Transverse colon (tissue), 4 donors: ENCODE measurements at regions of chr3 and their contacts with region 1.

Region 1: DNA sequence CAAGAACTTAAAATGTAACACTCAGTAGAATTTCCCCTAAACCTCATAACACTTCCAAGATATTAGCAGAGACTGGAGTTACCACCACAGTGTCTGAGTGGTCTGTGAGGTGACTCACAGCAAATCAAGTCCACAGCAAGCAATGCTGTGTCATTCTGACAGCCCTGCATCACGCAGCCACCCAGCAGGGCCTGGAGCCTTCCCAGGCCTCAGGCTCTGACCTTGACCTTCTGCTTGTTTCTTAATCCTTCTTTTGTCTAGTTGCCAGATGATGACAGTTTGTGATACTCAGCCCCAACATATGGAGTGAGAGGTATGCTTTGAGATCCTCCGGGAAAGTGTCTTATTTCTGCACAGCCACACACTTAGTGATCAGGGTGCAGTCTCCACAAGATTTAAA is 82.5 kb downstream of the TOP2B start:
- DNase-seq: no peak
- H3K4me3 ChIP-seq: no peak overlapping the region
- H3K27ac ChIP-seq: no peak overlapping the region
- H3K4me1 ChIP-seq: no peaks in the 10 kb centered on the region
- H3K27me3 ChIP-seq: no peaks in the 10 kb centered on the region
- CTCF ChIP-seq: no peak
- EP300 ChIP-seq: no peak
- POLR2A ChIP-seq: no peak

Region 2: GRCh38 chr3:24773798-24774197 is 808.4 kb before region 1 on chr3:
- in situ Hi-C with region 1: loop called in 2 of 4 experiments (anchors 25 kb)
- intact Hi-C with region 1: loop called (anchors 10 kb)
- DNase-seq: peak; percentile 18
- H3K4me3 ChIP-seq: no peak overlapping the region
- H3K27ac ChIP-seq: no peak overlapping the region
- H3K4me1 ChIP-seq: no peaks in the 10 kb centered on the region
- H3K27me3 ChIP-seq: no peaks in the 10 kb centered on the region
- CTCF ChIP-seq: peak; percentile 46 to 68 (median 58)
- EP300 ChIP-seq: no peak
- POLR2A ChIP-seq: no peak

Region 3: DNA sequence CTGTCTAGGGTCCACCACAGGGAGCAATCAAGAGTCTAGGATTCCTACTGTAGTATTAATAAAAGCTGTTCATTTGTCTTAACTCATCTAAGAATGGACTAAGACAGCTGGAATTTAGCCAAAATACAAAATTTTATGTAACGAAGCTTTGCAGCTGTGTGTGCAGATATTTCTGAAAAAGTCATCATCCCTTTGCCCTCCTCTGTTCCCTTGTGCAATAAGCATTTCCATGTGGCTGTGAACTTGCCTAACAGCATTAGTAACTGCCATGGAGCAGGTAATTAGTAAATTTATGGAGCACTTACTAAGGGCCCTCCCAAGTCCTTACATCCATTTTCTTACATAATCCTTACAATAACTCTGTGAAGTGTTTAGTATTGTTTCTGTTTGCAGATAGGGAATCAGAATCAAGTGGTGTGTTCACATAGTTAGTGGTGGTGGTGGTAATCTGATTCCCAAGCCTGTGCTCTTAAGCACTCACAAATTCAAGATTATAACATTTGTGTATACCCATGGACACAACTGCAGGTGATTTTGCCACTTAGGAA is 39.7 kb before region 1 on chr3:
- in situ Hi-C with region 1: no loop called
- intact Hi-C with region 1: no loop called
- DNase-seq: no peak
- H3K4me3 ChIP-seq: no peak overlapping the region
- H3K27ac ChIP-seq: no peak overlapping the region
- H3K4me1 ChIP-seq: no peaks in the 10 kb centered on the region
- H3K27me3 ChIP-seq: no peaks in the 10 kb centered on the region
- CTCF ChIP-seq: no peak
- EP300 ChIP-seq: no peak
- POLR2A ChIP-seq: no peak